ENCODE measurements at regions of chr13 and their contacts with region 1.

Region 1: DNA sequence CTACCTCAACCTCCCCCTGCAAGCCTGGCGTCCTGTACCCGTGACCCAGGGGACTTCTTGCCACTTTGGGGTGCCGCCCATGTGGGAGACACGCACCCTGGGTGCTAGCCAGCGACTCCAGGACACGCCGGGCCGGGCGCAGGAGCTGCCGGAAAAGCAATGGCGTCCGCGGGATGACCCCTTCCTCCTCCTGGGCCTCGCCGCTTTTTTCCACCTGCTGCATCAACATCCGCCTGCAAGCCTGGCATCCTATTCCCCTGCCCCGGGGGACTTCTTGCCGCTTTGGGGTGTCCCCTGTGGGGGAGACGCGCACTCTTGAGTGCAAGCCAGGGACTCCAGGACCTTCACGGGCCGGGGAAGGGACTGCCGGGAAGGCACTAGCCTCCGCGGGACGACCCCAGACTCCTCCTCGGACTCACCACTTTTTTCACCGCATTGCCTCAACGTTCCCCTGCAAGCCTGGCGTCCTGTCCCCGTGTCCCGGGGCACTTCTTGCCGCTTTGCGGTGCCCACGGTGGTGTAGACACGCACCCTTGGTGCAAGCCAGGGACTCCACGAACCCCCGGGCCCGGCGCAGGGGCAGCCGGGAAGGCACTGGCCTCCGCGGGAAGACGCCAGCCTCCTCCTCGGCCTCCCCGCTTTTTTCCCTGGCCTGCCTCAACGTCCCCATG is 237.8 kb downstream of the TUBA3C start:
- DNase-seq: peak; percentile 70

Region 2: DNA sequence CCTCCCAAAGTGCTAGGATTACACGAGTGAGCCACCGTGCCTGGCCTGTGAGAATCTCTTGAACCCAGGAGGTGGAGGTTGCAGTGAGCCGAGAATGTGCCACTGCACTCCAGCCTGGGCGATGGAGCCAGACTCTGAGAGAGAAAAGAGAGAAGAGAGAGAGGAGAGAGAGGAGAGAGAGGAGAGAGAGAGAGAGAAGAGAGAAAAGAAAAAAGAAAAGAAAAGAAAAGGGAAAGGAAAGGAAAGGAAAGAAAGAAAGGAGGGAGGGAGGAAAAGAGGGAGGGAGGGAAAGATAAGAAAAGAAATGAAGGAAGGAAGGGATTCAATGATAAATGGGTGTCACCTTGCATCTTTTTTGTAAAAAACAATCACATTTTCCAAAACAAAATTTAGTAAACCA is 861.9 kb after region 1 on chr13:
- intact Hi-C with region 1: no loop called
- DNase-seq: no peak

Region 3: GRCh38 chr13:20239748-20240147 is 1295.9 kb after region 1 on chr13:
- intact Hi-C with region 1: loop called in 1 of 2 experiments (anchors 5 kb)
- DNase-seq: no peak

Measured in posterior vena cava (tissue), 2 donors.